Activated CD4-positive, alpha-beta memory T cell treated with anti-CD3 and anti-CD28 coated beads, Interleukin-2, amount 10 ng/mL, durations not matched to agents 7 days and 5 days (primary cell): ENCODE measurements at regions of chr11 and their contacts with region 1.

Region 1: GRCh38 chr11:61111786-61112517 is 9.7 kb downstream of the CD5 start:
- DNase-seq: peak; percentile 84
- H3K4me3 Mint-ChIP-seq: no peak overlapping the region
- H3K27ac Mint-ChIP-seq: peak overlapping the region; percentile 96
- H3K4me1 Mint-ChIP-seq: peaks cover 98% of the 10 kb centered on the region
- H3K27me3 Mint-ChIP-seq: no peaks in the 10 kb centered on the region

Region 2: GRCh38 chr11:60647087-60647486 is 464.9 kb before region 1 on chr11:
- CTCF ChIA-PET with region 1: no interaction called
- POLR2A ChIA-PET with region 1: no interaction called
- DNase-seq: no peak
- H3K4me3 Mint-ChIP-seq: no peak overlapping the region
- H3K27ac Mint-ChIP-seq: no peak overlapping the region
- H3K4me1 Mint-ChIP-seq: no peaks in the 10 kb centered on the region
- H3K27me3 Mint-ChIP-seq: peaks cover 4% of the 10 kb centered on the region

Region 3: GRCh38 chr11:60913793-60914632 is 197.9 kb before region 1 on chr11 and contains the start of gene TMEM109:
- CTCF ChIA-PET with region 1: interaction called, 30 read pairs
- POLR2A ChIA-PET with region 1: interaction called, 19 read pairs
- DNase-seq: peak; percentile 88
- H3K4me3 Mint-ChIP-seq: peak within 1 kb of the TSS; percentile 96
- H3K27ac Mint-ChIP-seq: peak within 1 kb of the TSS; percentile 95
- H3K4me1 Mint-ChIP-seq: peaks cover 46% of the 10 kb centered on the region
- H3K27me3 Mint-ChIP-seq: peaks cover 7% of the 10 kb centered on the region
- total RNA-seq, gene TMEM109: 101 to 110 TPM

Region 4: DNA sequence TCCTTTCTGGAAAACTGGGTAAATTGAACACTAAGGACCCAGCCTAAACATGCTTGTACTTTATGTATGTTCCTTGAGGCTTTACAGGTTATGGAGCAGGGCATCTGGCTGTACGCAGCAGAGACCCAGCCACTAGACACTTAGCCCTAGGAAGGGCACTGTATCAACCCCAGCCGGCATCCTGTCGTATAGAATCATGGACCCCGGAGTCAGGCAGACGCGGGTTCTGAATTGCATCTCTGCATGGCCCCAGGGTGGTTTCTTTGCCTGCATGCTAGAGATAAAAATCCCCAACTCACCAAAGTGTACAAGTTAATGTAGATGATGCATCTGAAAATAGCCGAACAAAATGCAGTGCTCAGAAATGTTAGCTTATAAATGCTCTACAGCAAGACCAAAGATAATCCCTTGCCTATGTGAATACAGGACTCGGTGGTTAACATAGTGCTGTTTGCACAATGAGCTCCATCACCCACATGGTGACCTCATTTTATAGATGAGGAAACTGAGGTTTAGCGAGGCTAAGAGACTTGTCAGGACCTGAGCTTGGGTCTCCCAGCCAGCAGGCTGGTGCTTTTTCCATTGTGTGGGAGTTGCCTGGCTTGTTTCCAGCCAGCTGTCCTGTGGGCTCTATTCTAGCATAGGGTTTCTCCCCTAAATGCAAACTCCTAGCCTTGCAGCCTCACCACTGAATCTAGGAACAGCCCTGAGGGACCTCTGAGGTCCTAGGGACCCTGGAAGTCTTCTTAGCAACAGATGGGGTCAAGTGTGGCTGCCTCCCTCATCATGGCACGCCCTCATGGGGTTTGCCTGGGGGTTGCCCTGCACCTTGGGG is 133.2 kb before region 1 on chr11:
- CTCF ChIA-PET with region 1: interaction called, 5 read pairs
- POLR2A ChIA-PET with region 1: interaction called, 22 read pairs
- DNase-seq: peak; percentile 60
- H3K4me3 Mint-ChIP-seq: peak overlapping the region; percentile 69
- H3K27ac Mint-ChIP-seq: peak overlapping the region; percentile 99
- H3K4me1 Mint-ChIP-seq: peaks cover 84% of the 10 kb centered on the region
- H3K27me3 Mint-ChIP-seq: no peaks in the 10 kb centered on the region

Region 5: GRCh38 chr11:61021661-61022212 is 90.2 kb before region 1 on chr11:
- CTCF ChIA-PET with region 1: no interaction called
- POLR2A ChIA-PET with region 1: interaction called, 14 read pairs
- DNase-seq: peak; percentile 83
- H3K4me3 Mint-ChIP-seq: peak overlapping the region; percentile 59
- H3K27ac Mint-ChIP-seq: peak overlapping the region; percentile 91
- H3K4me1 Mint-ChIP-seq: peaks cover 74% of the 10 kb centered on the region
- H3K27me3 Mint-ChIP-seq: no peaks in the 10 kb centered on the region

Region 6: GRCh38 chr11:61061081-61061826 is 50.7 kb before region 1 on chr11:
- CTCF ChIA-PET with region 1: interaction called, 6 read pairs
- POLR2A ChIA-PET with region 1: interaction called, 27 read pairs
- DNase-seq: peak; percentile 87
- H3K4me3 Mint-ChIP-seq: peak overlapping the region; percentile 65
- H3K27ac Mint-ChIP-seq: peak overlapping the region; percentile 96
- H3K4me1 Mint-ChIP-seq: peaks cover 87% of the 10 kb centered on the region
- H3K27me3 Mint-ChIP-seq: no peaks in the 10 kb centered on the region

Region 7: DNA sequence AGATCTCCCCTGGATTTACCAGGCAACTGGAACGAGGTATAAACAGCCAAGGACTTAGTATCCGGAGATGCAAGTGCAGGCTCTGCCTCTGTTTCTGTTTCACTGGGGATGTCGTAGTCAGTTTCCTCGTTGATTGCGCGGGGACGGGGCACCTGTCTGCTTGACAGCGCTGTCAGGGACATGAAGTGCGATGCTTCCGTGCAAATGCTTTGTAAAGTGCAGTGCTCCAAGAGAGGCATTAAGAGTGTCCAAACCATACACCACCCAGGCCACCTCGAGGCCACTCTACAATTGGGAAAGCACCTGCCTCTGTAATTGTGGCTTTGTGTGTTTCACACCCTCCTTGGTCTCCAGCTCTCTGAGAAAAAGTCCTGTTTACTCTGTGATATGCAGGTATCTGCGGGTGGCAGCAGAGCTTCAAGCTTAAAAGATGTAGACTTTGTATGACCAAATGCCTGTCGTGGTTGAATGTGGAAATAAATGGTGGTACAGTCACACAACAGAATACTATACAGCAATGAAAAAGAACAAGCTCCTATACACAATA is 28.3 kb before region 1 on chr11:
- CTCF ChIA-PET with region 1: interaction called, 18 read pairs
- POLR2A ChIA-PET with region 1: interaction called, 134 read pairs
- DNase-seq: peak; percentile 81
- H3K4me3 Mint-ChIP-seq: peak overlapping the region; percentile 82
- H3K27ac Mint-ChIP-seq: peak overlapping the region; percentile 96
- H3K4me1 Mint-ChIP-seq: peaks cover 61% of the 10 kb centered on the region
- H3K27me3 Mint-ChIP-seq: no peaks in the 10 kb centered on the region

Region 8: GRCh38 chr11:61129639-61130523 is 17.9 kb after region 1 on chr11:
- CTCF ChIA-PET with region 1: interaction called, 17 read pairs
- POLR2A ChIA-PET with region 1: interaction called, 29 read pairs
- DNase-seq: peak; percentile 92
- H3K4me3 Mint-ChIP-seq: peak overlapping the region; percentile 0
- H3K27ac Mint-ChIP-seq: peak overlapping the region; percentile 42
- H3K4me1 Mint-ChIP-seq: peaks cover 20% of the 10 kb centered on the region
- H3K27me3 Mint-ChIP-seq: no peaks in the 10 kb centered on the region

Region 9: DNA sequence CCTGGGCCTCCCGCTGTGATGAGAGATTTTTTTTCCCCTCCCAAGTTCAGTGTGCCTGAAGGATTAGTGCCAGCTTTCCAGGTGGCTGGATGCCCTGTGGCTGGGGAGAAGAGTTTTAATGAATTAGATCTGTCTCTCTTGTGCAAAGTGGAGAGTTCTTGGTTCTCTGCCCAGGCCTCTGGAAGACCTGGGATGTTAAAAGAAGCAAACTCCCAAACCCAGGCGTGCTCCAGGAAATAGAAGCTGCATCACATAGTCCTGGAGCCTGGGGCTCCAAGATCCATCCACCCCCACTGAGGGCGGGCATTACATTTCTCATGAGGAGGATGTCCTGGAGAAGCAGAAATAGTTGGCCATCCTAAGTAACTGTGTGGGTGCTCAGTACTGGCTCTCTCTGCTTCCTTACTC is 348.5 kb after region 1 on chr11:
- CTCF ChIA-PET with region 1: no interaction called
- POLR2A ChIA-PET with region 1: no interaction called
- DNase-seq: no peak
- H3K4me3 Mint-ChIP-seq: no peak overlapping the region
- H3K27ac Mint-ChIP-seq: peak overlapping the region; percentile 23
- H3K4me1 Mint-ChIP-seq: no peaks in the 10 kb centered on the region
- H3K27me3 Mint-ChIP-seq: no peaks in the 10 kb centered on the region

Region 10: DNA sequence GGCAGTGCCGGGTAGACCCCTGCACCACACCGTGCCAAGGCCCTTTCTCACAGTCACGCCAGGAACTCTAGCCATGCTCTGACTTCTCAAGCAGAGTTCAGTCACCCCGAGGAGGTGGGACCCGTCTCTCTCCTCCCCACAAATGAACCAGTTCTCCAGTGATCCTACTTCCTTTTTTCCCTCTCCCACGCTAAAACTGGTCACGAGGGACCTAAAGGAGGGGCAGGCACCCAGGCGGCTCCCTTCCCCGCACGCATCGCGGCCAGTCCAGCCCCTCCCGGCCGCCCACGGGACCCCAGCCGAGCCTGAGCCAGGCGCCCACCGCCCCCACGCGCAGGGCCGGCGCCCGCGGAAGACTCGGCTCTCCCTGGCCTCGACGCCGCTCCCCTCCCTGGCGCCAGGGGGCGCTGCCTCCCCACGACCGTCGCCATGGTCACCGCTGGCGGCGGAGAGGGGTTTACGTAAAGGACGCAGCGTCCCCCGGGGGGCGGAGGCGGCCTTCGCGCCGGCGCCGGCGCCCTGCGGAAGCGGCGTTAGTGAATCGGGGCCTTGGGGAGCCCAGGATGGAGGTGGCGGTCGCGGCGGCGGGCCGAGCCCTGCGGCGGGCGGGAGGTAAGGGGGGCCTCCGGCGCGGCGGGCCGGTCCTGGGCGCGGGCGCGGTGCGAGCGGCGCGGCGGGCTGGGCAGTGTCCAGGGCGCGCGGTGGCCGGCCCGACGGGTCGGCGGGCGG is 568.1 kb after region 1 on chr11 and contains the start of gene DAGLA:
- CTCF ChIA-PET with region 1: no interaction called
- POLR2A ChIA-PET with region 1: no interaction called
- DNase-seq: peak; percentile 75
- H3K4me3 Mint-ChIP-seq: peak within 1 kb of the TSS; percentile 26
- H3K27ac Mint-ChIP-seq: no peak within 1 kb of the TSS
- H3K4me1 Mint-ChIP-seq: peaks cover 4% of the 10 kb centered on the region
- H3K27me3 Mint-ChIP-seq: peaks cover 28% of the 10 kb centered on the region
- total RNA-seq, gene DAGLA: 0.10 to 0.13 TPM